Left cardiac atrium (tissue), 4 donors: ENCODE measurements at regions of chr7 and their contacts with region 1.

Region 1: DNA sequence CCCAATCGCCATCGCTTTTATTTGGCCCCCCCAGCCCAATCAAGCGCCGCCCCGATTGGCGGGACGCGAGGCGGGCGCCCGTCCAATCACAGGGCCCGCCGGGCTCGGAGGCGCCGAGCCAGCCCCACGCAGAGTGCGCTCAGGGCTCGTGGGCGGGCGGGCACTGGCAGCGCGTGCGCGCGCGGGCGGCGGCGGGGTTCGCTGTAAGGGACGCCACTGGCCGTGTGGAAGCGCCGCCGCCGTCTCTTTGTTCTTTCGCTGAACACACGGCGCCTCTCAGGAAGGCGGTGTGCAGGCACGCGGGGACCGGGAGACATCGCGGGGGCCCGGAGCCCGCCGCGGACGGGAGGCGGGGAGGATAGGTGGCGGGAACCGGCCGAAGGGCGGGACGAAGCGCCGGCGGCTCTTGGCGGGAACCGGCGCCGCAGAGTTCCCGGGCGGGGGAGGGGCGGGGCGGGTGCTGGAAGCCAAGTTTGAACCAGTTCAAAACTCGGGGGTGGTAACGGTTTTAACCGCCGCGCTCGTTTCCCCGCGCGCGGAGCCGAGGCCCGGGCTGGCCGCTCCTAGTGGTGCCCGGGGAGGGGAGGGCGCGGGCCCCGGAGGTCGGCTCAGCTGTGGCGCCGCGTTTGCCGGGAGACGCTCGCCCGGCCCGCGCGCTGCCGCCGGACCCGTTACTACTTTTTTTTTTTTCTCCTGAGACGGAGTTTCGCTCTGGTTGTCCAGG is 370 bp upstream of the EZH2 start:
- DNase-seq: peak; percentile 94
- ATAC-seq: peak; percentile 98 to 99

Region 2: DNA sequence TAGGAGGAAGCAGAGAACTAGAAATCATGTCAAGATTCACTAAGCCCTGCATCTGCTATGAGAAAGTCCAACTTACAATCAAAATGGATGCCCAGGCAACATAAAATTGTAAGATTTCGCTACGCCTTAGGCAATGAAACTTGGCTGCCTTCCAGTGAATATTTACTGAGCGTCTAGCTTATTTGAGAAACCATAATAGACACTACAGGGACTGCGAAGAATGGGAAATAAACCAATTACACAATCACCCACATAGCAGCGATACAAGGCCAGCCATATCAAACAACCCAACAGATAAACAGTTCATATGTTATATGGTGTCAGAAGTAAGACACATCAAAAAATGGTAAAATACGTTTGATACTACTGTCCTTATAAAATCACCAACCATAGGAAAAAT is 838.9 kb before region 1 on chr7:
- intact Hi-C with region 1: no loop called
- DNase-seq: no peak
- ATAC-seq: no peak

Region 3: GRCh38 chr7:148503875-148504487 is 380.5 kb before region 1 on chr7:
- intact Hi-C with region 1: loop called in 1 of 2 experiments (anchors 10 kb)
- DNase-seq: no peak
- ATAC-seq: no peak

Region 4: DNA sequence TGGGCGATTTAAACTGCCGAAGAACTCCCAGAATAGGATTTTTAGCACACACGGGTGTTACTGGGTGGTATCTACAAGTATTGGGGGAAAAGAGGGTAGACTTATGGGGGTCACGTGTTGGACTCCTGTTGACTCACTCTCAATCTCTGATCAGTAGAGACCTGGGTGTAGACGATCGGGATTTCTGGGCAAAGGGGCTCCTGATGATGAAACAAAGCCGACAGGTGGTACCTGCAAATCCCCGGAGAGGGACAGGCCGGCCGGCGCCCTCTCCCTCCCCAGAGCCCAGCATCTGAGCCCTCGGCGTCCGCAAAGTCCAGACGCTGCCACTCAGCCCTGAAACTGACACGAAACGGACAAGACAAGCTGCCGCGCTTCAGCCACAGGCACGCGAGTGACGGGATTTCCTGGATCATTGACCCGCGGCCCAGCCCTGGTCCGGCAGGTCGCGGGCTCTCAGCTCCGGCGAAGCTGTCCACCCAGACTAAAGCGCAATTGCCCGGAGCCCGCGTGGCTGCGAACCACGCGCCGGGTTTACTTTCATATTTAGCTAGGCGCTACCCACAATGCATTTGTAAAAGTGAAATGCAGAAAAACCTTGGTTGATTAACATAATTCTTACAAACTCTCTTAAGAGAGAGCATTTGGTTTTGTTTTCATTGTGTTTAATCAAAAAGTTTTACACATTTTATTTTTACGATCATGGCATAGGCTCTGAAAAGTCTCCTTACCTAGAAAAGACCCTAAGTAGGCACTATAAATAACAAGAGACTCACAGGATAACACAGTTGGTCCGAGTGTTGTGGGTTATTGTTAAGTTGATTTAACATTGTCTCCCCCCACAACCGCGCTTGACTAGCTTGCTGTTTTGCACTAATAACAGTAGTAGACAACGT is 56.5 kb after region 1 on chr7:
- intact Hi-C with region 1: loop called in 1 of 2 experiments (anchors 2 kb)
- DNase-seq: peak; percentile 91
- ATAC-seq: peak; percentile 96 to 98